Mammary epithelial cell (primary cell): ENCODE measurements at regions of chr7 and their contacts with region 1.

Region 1: GRCh38 chr7:82017334-82017943 is 247.6 kb upstream of the HGF start:
- DNase-seq: peak; percentile 7
- H3K4me3 ChIP-seq: no peak overlapping the region
- H3K27ac ChIP-seq: no peak overlapping the region
- H3K4me1 ChIP-seq: peaks cover 8% of the 10 kb centered on the region
- H3K27me3 ChIP-seq: no peaks in the 10 kb centered on the region
- CTCF ChIP-seq: peak; percentile 40 to 67

Region 2: DNA sequence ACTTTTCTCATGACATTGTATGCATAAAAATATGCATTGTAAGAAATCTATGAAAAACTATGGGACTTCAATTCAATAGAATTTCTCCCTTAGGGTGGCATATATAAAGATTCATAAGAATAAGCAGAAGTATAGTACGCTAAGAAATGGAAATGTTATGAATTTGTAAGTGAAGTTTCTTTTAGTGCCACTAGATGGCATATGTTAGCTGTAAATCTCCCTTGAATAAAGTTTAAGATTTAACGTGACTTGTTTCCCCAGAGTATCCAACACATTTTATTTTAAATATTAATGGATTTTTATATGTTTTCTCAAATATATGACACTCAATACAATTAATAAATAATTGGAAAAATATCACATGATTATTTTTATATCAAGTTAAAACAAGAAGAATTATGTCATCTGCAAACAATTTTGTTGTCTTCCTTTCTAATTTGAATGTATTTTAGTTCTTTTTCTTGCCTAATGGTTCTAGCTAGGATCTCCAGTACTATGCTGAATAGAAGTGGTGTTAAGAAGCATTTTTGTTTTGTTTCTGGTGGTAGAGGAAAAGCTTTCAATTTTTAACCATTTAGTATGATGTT is 534.7 kb before region 1 on chr7:
- CTCF ChIA-PET with region 1: no interaction called
- dilution Hi-C with region 1: no loop called
- in situ Hi-C with region 1: loop called in 1 of 2 experiments (anchors 10 kb)
- intact Hi-C with region 1: loop called (anchors 1 kb)
- DNase-seq: no peak
- H3K4me3 ChIP-seq: no peak overlapping the region
- H3K27ac ChIP-seq: no peak overlapping the region
- H3K4me1 ChIP-seq: no peaks in the 10 kb centered on the region
- H3K27me3 ChIP-seq: no peaks in the 10 kb centered on the region
- CTCF ChIP-seq: peak; percentile 42 to 57

Region 3: GRCh38 chr7:81549484-81550016 is 467.9 kb before region 1 on chr7:
- CTCF ChIA-PET with region 1: no interaction called
- dilution Hi-C with region 1: no loop called
- in situ Hi-C with region 1: no loop called
- intact Hi-C with region 1: no loop called
- DNase-seq: no peak
- H3K4me3 ChIP-seq: no peak overlapping the region
- H3K27ac ChIP-seq: no peak overlapping the region
- H3K4me1 ChIP-seq: no peaks in the 10 kb centered on the region
- H3K27me3 ChIP-seq: no peaks in the 10 kb centered on the region
- CTCF ChIP-seq: no peak

Region 4: GRCh38 chr7:82044497-82045080 is 27.1 kb after region 1 on chr7:
- CTCF ChIA-PET with region 1: no interaction called
- dilution Hi-C with region 1: no loop called
- in situ Hi-C with region 1: no loop called
- intact Hi-C with region 1: no loop called
- DNase-seq: peak; percentile 29
- H3K4me3 ChIP-seq: no peak overlapping the region
- H3K27ac ChIP-seq: no peak overlapping the region
- H3K4me1 ChIP-seq: peaks cover 4% of the 10 kb centered on the region
- H3K27me3 ChIP-seq: no peaks in the 10 kb centered on the region
- CTCF ChIP-seq: peak; percentile 48 to 61

Region 5: DNA sequence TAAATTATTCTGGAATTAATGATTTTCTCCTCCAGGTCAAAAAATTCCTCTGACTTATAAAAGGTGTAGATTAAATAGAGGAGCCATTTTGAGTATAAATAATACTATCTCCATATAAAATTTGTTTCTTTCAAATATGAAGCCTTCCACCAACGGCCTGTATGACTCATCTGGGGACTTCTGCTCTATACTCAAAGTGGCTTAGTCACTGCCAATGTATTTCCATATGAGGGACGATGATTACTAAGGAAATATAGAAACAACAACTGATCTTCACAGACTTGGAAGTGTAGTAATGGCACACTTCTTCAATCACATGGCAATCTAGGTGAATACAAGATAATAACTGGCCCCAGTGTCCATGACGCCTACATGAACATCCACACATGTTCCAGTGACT is 88.0 kb after region 1 on chr7:
- CTCF ChIA-PET with region 1: no interaction called
- dilution Hi-C with region 1: no loop called
- in situ Hi-C with region 1: no loop called
- intact Hi-C with region 1: no loop called
- DNase-seq: peak; percentile 73
- H3K4me3 ChIP-seq: no peak overlapping the region
- H3K27ac ChIP-seq: no peak overlapping the region
- H3K4me1 ChIP-seq: peaks cover 8% of the 10 kb centered on the region
- H3K27me3 ChIP-seq: no peaks in the 10 kb centered on the region
- CTCF ChIP-seq: no peak